ENCODE measurements at regions of chr3 and their contacts with region 1.

Region 1: DNA sequence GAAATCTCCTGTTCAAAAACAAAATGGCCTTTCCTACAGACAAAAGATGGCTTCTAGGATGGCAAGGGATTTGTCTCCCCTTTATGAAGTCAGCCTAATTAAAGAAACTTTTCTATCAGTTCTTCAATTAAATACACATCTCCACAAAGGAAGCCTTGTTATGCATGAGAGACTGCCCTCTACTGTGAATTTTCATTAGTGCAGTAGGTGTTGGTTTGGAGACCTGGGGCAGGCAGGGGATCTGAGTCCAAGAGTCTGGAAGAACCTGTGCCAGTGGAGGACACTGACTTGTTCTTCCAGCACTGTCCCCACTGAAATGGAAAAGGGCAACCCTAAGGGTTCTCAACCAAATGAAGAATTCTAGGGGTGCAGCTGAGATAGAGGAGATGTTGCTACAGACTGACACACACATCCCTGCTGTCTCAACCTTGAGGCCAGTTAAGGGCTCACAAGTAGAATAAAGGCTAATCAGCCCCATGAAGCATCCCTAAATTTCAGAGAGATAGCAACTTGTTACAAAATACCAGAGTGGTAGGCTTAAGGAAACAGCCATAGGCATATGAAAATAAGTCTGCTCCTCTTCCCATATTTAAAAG is 174.0 kb upstream of the PRICKLE2 start:
- DNase-seq: peak in 1 of 2 donors; percentile 64
- ATAC-seq: peak; percentile 58 to 80 (median 70)
- H3K4me3 ChIP-seq: no peak overlapping the region
- H3K27ac ChIP-seq: no peak overlapping the region
- H3K4me1 ChIP-seq: no peaks in the 10 kb centered on the region
- H3K27me3 ChIP-seq: no peaks in the 10 kb centered on the region
- CTCF ChIP-seq: peak; percentile 71 to 88 (median 84)

Region 2: DNA sequence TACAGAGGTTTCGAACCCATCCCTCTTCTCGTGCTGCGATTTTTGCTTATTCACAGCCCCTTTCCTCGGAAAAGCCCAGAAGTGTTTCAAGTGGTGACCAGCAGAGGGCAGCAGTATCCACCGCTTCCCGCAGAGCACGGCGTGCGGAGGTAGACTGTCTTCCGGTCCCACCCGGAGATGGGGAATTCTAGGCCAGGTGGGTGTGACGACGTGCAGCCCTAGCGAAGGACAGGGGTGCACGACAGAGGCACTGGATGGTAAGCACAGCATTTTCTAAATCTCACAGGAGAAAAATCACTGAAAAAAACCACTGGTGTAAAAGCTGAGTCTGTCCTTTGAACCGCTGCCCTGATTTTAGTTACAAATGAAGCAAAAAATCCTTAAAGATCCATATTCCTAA is 368.6 kb before region 1 on chr3:
- intact Hi-C with region 1: loop called (anchors 1 to 2 kb)
- DNase-seq: peak; percentile 70 to 74
- ATAC-seq: peak; percentile 82 to 96 (median 89)
- H3K4me3 ChIP-seq: peak overlapping the region in 7 of 10 donors; percentile 9 to 47 (median 29)
- H3K27ac ChIP-seq: no peak overlapping the region
- H3K4me1 ChIP-seq: peaks cover 0 to 11% (median 3%) of the 10 kb centered on the region in 9 donors
- H3K27me3 ChIP-seq: peaks cover 0 to 18% (median 4%) of the 10 kb centered on the region in 7 donors
- CTCF ChIP-seq: peak; percentile 79 to 96 (median 87)

Region 3: DNA sequence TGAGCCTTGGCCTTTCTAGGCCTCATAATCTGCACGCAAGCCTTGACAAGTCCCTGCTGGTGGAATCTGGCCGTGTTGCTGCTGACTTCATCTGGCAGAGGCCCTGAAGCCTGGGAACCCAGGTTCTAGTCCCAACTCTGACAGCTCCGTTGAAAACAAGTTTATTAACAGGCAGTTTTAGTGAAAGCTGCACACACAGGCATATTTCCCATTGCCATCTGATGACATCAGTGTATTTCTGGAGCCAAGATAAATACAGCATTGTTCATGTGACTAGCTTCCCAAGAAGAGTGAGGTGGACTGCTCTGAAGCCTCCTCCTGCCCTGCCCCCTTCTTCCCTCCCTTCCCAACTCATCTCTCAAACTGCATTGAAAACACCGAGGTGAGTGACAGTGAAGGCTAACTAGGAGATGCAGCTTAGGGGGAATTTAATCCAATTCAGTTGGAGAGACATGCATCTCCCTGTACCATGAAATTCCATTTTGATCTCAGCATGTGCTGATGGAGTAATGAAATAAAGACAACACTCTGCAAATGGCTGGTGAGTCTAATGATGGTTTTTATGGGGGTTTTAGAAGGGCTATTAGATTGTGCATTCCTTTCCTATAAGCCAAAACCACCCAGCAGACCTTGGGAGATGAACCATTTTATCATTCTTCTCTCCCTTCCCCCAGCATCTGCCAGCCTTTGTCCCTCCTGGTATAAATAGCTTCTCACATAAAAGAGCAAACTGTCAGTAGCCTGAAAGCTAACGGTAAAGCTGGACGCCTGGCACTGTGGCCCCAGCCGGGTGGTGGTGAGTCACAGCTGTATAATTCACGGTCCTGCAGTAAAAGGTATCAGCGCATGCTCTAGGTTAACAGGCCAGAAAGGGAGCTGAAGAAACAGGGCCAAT is 212.0 kb before region 1 on chr3:
- intact Hi-C with region 1: loop called in 1 of 10 experiments (anchors 10 kb)
- DNase-seq: peak; percentile 54 to 75
- ATAC-seq: peak; percentile 78 to 89 (median 84)
- H3K4me3 ChIP-seq: peak overlapping the region in 1 of 10 donors; percentile 2
- H3K27ac ChIP-seq: peak overlapping the region; percentile 31 to 85 (median 72)
- H3K4me1 ChIP-seq: peaks cover 23 to 82% (median 59%) of the 10 kb centered on the region in 9 donors
- H3K27me3 ChIP-seq: no peaks in the 10 kb centered on the region
- CTCF ChIP-seq: peak in 2 of 9 donors; percentile 16 to 26

Region 4: GRCh38 chr3:64238971-64239667 is 160.2 kb before region 1 on chr3:
- intact Hi-C with region 1: loop called in 1 of 10 experiments (anchors 10 kb)
- DNase-seq: peak; percentile 67 to 76
- ATAC-seq: peak; percentile 90 to 99 (median 96)
- H3K4me3 ChIP-seq: peak overlapping the region in 1 of 10 donors; percentile 1
- H3K27ac ChIP-seq: peak overlapping the region in 8 of 10 donors; percentile 1 to 76 (median 40)
- H3K4me1 ChIP-seq: peaks cover 0 to 28% (median 9%) of the 10 kb centered on the region in 9 donors
- H3K27me3 ChIP-seq: no peaks in the 10 kb centered on the region
- CTCF ChIP-seq: no peak

Region 5: GRCh38 chr3:64278625-64279024 is 120.7 kb before region 1 on chr3:
- intact Hi-C with region 1: loop called in 1 of 10 experiments (anchors 10 kb)
- DNase-seq: no peak
- ATAC-seq: no peak
- H3K4me3 ChIP-seq: no peak overlapping the region
- H3K27ac ChIP-seq: no peak overlapping the region
- H3K4me1 ChIP-seq: no peaks in the 10 kb centered on the region
- H3K27me3 ChIP-seq: no peaks in the 10 kb centered on the region
- CTCF ChIP-seq: no peak

Region 6: DNA sequence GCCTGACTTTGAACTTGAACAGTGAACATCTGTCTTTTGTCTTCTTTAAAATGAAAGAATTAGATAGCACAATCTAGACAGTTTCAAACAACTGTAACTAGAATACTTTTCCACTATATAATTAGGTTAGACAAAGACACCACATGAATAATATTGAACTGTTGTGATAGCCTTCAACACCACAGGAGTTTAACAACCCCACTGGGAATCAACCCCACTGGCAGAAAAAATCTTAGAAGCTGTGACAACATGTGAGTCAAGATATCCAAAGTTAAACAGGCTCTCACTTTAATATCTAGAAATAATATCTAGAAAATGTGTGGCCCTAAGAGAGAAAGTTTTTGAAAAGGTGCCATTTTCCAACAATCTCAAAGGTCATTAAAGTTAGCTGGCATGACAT is 109.7 kb before region 1 on chr3:
- intact Hi-C with region 1: no loop called
- DNase-seq: no peak
- ATAC-seq: no peak
- H3K4me3 ChIP-seq: no peak overlapping the region
- H3K27ac ChIP-seq: no peak overlapping the region
- H3K4me1 ChIP-seq: peaks cover 0 to 6% (median 0%) of the 10 kb centered on the region in 9 donors
- H3K27me3 ChIP-seq: no peaks in the 10 kb centered on the region
- CTCF ChIP-seq: no peak

Region 7: DNA sequence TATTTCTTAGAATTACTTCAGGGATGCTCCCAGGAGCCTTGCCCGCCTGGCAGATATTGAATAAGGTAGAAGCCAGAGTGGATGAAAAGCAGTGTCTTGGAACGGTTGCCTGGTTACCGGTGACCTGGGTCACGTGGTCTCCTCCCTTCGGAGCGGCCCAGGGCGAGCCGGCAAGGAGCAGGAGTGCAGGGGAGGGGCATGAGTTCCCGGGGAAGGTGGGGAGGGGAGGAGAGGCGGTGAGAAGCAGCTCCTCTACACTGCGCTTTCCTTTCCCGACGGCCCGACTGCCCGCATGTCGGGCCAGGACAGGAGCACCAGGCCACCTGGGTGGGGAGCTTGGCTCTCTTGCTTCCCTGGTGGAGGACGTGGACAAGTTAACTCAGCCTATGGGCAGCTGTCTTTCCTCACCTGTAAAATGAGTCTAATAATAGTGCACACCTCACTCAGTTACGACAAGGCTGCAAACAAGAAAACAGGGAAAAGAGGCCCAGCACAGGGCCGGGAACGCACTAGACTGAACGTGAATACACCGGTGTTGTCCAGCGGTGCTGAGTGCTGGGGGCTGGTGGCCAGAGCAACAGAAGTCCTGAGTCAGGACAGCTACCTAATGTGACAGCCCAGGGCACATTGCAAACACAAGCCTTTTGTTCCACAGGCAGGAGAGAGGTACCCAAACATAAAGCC is 90.2 kb after region 1 on chr3:
- intact Hi-C with region 1: loop called in 6 of 10 experiments (anchors 2 to 10 kb)
- DNase-seq: peak; percentile 10 to 20
- ATAC-seq: peak; percentile 36 to 68 (median 53)
- H3K4me3 ChIP-seq: peak overlapping the region in 2 of 10 donors; percentile 17 to 20
- H3K27ac ChIP-seq: no peak overlapping the region
- H3K4me1 ChIP-seq: peaks cover 0 to 18% (median 0%) of the 10 kb centered on the region in 9 donors
- H3K27me3 ChIP-seq: peaks cover 0 to 65% (median 20%) of the 10 kb centered on the region in 7 donors
- CTCF ChIP-seq: no peak

Measured in heart right ventricle (tissue), 16 donors.